ENCODE measurements at regions of chr5 and their contacts with region 1.

Region 1: DNA sequence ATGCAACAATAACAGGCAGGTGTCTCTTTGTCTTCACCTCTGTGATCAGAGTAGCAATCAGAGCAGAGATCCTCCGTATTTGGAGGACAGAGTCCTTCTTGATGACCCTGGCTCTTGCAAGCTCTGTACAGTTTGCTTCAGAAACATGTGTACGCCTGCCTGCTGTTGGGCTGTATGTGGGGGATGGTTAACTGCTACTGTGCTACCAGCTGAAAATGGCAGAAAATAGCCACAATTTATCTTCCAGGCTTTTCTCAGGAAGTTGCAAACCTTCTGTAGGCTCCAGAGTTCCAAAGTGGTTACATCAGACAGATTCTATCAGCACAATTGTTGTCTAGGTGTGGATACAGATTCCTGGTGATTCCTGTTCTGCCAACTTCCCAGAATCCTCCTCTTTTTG is 35.5 kb downstream of the DDX46 start:
- DNase-seq: no peak
- H3K4me3 ChIP-seq: no peak overlapping the region
- H3K27ac ChIP-seq: no peak overlapping the region
- H3K4me1 ChIP-seq: no peaks in the 10 kb centered on the region
- H3K27me3 ChIP-seq: no peaks in the 10 kb centered on the region
- CTCF ChIP-seq: no peak
- EP300 ChIP-seq: no peak
- POLR2A ChIP-seq: no peak

Region 2: DNA sequence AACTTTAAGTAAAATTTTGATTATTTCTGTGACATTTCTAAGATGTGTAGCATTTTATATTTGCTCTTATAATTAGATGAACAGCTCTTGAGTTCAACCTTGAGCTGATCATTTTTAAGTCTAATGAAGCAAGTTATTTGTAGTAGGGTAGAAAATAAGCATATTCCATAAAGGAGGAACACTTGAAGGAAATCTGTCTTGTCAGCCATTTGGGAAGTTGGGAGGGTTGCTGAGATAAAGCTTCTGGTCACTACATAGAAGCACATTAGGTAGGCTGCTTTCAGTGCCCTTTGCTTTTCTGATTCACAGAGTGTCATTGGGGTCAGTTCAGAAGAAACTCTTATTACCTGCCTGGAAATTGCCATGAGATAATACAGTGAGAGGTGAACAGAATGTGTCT is 101.4 kb before region 1 on chr5:
- intact Hi-C with region 1: loop called (anchors 10 kb)
- DNase-seq: no peak
- H3K4me3 ChIP-seq: no peak overlapping the region
- H3K27ac ChIP-seq: no peak overlapping the region
- H3K4me1 ChIP-seq: no peaks in the 10 kb centered on the region
- H3K27me3 ChIP-seq: no peaks in the 10 kb centered on the region
- CTCF ChIP-seq: no peak
- EP300 ChIP-seq: no peak
- POLR2A ChIP-seq: no peak

Region 3: GRCh38 chr5:135053278-135053677 is 259.2 kb after region 1 on chr5:
- intact Hi-C with region 1: no loop called
- DNase-seq: no peak
- H3K4me3 ChIP-seq: no peak overlapping the region
- H3K27ac ChIP-seq: no peak overlapping the region
- H3K4me1 ChIP-seq: peaks cover 0 to 4% (median 0%) of the 10 kb centered on the region in 4 donors
- H3K27me3 ChIP-seq: peaks cover 0 to 52% (median 3%) of the 10 kb centered on the region in 4 donors
- CTCF ChIP-seq: no peak
- EP300 ChIP-seq: no peak
- POLR2A ChIP-seq: no peak